SK-N-SH (cell line): ENCODE measurements at regions of chr5 and their contacts with region 1.

Region 1: DNA sequence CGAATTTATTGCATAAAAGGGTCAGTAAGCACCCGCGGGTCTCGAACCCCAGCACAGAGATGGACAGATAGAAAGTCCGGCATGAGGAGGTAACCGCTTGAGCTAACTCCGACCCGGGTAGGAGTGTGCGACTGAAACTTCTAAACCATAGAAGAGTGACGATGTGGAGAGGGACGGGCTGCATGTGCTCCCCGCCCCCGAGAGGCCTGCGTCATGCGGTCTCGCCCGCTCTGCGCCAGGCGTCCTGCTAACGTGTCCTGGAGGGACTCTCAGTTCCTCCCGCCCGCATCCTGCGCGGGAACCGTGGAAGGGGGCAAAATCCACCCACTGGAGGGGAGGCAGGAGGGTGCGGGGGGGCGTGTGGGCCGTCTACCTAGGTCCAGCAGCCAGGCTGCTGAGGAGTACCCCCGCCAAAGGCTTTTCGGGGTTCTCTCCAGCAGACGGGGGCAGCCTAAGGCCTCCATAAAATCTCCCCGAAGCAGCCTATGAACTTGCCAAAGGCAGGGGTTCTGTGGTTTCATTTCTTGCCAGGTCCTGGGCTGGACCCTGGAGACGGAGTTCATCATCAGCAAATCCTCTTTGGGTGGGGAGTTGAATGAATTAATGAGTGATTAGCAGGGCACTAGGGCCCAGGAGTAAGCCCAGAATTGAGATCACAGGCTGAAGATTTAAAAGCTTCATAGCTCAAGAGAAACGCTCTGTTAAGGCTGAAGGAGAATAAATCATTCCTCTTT is 51.9 kb downstream of the TGFBI start:
- DNase-seq: no peak
- H3K4me3 ChIP-seq: no peak overlapping the region
- H3K27ac ChIP-seq: no peak overlapping the region
- H3K4me1 ChIP-seq: no peaks in the 10 kb centered on the region; a peak in 1 of 4 replicates
- H3K27me3 ChIP-seq: no peaks in the 10 kb centered on the region
- CTCF ChIP-seq: no peak
- EP300 ChIP-seq: no peak
- RAD21 ChIP-seq: no peak

Region 2: GRCh38 chr5:135246923-135247795 is 833.5 kb before region 1 on chr5:
- CTCF ChIA-PET with region 1: no interaction called
- POLR2A ChIA-PET with region 1: no interaction called
- DNase-seq: no peak
- H3K4me3 ChIP-seq: no peak overlapping the region; a peak in 1 of 4 replicates
- H3K27ac ChIP-seq: peak overlapping the region; percentile 47 to 87
- H3K4me1 ChIP-seq: peaks cover 36 to 52% of the 10 kb centered on the region in 2 experiments
- H3K27me3 ChIP-seq: no peaks in the 10 kb centered on the region
- CTCF ChIP-seq: no peak
- EP300 ChIP-seq: peak in 1 of 2 experiments; percentile 90; a peak in 2 of 4 replicates
- RAD21 ChIP-seq: no peak

Region 3: GRCh38 chr5:135887351-135887864 is 193.2 kb before region 1 on chr5:
- CTCF ChIA-PET with region 1: interaction called, 15 read pairs
- POLR2A ChIA-PET with region 1: no interaction called
- DNase-seq: peak; percentile 78
- H3K4me3 ChIP-seq: 0 out of 4 replicates have a peak overlapping the region, but pooled peaks of 1 of the 2 experiments have one; percentile 3
- H3K27ac ChIP-seq: no peak overlapping the region
- H3K4me1 ChIP-seq: peaks cover 0 to 5% of the 10 kb centered on the region in 2 experiments; a peak in 1 of 4 replicates
- H3K27me3 ChIP-seq: no peaks in the 10 kb centered on the region
- CTCF ChIP-seq: peak; percentile 95
- EP300 ChIP-seq: no peak
- RAD21 ChIP-seq: peak; percentile 95

Region 4: GRCh38 chr5:135944967-135945560 is 135.6 kb before region 1 on chr5:
- CTCF ChIA-PET with region 1: interaction called, 73 read pairs
- POLR2A ChIA-PET with region 1: no interaction called
- DNase-seq: peak; percentile 66
- H3K4me3 ChIP-seq: no peak overlapping the region
- H3K27ac ChIP-seq: peak overlapping the region; percentile 35 to 47; a peak in 2 of 4 replicates
- H3K4me1 ChIP-seq: no peaks in the 10 kb centered on the region
- H3K27me3 ChIP-seq: no peaks in the 10 kb centered on the region
- CTCF ChIP-seq: peak; percentile 86
- EP300 ChIP-seq: no peak
- RAD21 ChIP-seq: peak; percentile 96

Region 5: DNA sequence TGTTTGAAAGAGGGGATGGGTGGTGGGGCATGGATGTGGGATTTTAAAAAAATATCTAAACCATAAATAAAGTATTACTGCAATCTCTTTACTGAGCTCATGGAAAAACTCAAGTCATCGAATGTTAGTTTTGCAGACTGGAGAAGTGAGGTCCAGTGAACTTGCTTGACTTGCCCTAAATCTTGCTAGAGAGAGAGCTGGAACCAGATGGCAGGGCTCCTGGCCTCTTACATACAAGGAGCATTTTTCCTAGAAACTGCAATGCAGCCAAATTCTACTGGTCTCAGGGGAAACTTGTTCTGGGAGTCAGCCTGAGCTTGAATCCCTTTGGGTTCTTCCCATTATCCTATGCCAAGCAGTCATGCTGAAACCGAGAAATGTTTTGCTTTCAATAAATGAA is 54.8 kb before region 1 on chr5:
- CTCF ChIA-PET with region 1: interaction called, 10 read pairs
- POLR2A ChIA-PET with region 1: no interaction called
- DNase-seq: no peak
- H3K4me3 ChIP-seq: no peak overlapping the region
- H3K27ac ChIP-seq: peak overlapping the region in 1 of 2 experiments; percentile 29; a peak in 1 of 4 replicates
- H3K4me1 ChIP-seq: peaks cover 11 to 18% of the 10 kb centered on the region in 2 experiments
- H3K27me3 ChIP-seq: no peaks in the 10 kb centered on the region
- CTCF ChIP-seq: no peak
- EP300 ChIP-seq: no peak
- RAD21 ChIP-seq: no peak

Region 6: DNA sequence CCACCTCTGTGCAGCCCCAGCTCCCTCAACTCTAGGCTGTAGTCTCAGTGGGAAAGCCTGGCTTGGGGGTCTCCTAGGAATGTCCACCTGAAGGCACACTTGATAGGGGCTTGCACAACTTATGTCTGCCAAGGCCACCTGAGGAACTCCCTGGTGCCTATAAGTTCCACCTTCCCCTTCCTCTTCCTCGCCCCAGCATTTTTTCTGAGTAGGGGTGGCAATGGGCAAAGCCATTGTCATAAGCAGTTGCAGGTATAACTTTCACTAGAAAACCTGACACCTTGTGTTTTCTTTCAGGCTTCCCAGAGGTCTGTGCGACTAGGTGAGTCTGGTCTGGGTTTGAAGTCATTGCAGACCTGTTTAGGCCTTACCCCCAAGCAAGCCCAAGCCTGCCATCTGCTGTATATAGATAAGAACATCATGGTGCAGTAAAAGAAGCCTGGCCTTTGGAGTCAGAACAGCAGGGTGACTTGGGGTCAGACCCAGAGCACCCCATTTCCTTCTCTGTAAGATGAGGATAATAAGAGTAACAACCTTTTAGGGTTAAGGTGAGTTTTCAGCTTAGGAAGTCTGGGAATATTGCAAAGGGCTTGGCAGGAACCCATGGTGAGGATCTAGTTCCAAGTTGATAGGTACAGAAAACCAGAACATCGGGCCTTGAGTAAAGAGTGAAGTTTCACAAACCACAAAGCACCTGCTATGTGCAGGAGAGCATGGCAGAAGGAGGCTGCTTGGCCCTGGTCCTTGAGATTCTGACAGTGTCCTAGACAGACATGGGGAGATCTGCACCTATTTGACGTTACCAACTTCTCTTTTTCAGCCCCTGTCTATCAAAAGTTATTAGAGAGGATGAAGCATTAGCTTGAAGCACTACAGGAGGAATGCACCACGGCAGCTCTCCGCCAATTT is 18.0 kb before region 1 on chr5:
- CTCF ChIA-PET with region 1: interaction called, 19 read pairs
- POLR2A ChIA-PET with region 1: no interaction called
- DNase-seq: no peak
- H3K4me3 ChIP-seq: no peak overlapping the region
- H3K27ac ChIP-seq: peak overlapping the region in 1 of 2 experiments; percentile 17; a peak in 1 of 4 replicates
- H3K4me1 ChIP-seq: peaks cover 7 to 12% of the 10 kb centered on the region in 2 experiments; a peak in 3 of 4 replicates
- H3K27me3 ChIP-seq: no peaks in the 10 kb centered on the region
- CTCF ChIP-seq: peak; percentile 60
- EP300 ChIP-seq: no peak
- RAD21 ChIP-seq: peak; percentile 74